Activated B cell treated with CpG ODN at 0.5 μM for 24 hours (primary cell): ENCODE measurements at regions of chr7 and their contacts with region 1.

Region 1: DNA sequence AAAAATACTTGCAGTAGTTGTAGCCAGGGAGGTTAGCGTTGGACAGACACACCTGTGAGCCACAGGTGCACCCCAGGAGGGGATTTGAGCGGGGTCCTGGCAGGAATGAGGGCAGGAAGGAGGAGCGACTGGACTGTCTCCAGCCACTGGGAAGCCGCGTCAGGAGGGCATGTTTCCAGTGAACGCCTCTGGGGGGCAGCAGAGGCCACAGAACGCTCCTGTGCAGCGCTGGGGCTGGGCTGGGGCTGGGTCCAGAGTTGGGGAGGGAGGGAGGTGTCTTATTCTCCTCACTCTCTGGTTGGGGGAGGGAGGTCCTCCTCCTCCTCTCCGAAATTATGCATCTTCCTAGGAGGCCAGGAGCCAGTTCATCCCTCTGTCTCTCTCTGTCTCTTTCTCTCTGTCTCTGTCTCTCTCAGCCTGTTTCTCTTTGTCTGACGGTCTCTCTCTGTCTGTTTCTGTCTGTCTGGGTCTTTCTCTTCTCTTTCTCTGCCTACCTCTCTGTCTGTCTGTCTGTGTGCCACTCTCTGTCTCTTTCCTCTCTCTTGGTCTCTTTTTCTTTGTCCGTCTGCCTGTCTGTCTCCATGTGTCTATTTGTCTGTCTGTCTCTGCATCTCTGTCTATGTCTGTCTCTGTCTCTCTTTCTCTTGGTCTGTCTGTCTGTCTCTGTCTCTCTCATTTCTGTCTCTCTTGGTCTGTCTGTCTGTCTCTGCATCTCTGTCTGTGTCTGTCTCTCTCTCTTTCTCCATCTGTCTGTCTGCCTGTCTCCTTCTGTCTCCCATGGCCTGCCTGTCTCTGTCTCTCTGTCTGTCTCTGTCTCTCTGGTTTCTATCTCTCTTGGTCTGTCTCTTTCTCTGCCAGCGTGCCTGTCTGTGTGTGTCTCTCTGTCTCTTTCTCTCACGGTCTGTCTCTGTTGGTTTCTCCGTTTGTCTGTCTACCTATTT is 9.9 kb upstream of the PSMG3 start:
- DNase-seq: peak; percentile 62
- ATAC-seq: peak; percentile 100
- H3K4me3 Mint-ChIP-seq: no peak overlapping the region
- H3K27ac Mint-ChIP-seq: no peak overlapping the region
- H3K4me1 Mint-ChIP-seq: peaks cover 11% of the 10 kb centered on the region
- H3K27me3 Mint-ChIP-seq: no peaks in the 10 kb centered on the region
- CTCF ChIP-seq: peak; percentile 48

Region 2: GRCh38 chr7:1473864-1474512 is 105.8 kb before region 1 on chr7:
- CTCF ChIA-PET with region 1: no interaction called
- POLR2A ChIA-PET with region 1: no interaction called
- intact Hi-C with region 1: no loop called
- DNase-seq: peak; percentile 68
- ATAC-seq: peak; percentile 81
- H3K4me3 Mint-ChIP-seq: no peak overlapping the region
- H3K27ac Mint-ChIP-seq: no peak overlapping the region
- H3K4me1 Mint-ChIP-seq: no peaks in the 10 kb centered on the region
- H3K27me3 Mint-ChIP-seq: no peaks in the 10 kb centered on the region
- CTCF ChIP-seq: no peak

Region 3: DNA sequence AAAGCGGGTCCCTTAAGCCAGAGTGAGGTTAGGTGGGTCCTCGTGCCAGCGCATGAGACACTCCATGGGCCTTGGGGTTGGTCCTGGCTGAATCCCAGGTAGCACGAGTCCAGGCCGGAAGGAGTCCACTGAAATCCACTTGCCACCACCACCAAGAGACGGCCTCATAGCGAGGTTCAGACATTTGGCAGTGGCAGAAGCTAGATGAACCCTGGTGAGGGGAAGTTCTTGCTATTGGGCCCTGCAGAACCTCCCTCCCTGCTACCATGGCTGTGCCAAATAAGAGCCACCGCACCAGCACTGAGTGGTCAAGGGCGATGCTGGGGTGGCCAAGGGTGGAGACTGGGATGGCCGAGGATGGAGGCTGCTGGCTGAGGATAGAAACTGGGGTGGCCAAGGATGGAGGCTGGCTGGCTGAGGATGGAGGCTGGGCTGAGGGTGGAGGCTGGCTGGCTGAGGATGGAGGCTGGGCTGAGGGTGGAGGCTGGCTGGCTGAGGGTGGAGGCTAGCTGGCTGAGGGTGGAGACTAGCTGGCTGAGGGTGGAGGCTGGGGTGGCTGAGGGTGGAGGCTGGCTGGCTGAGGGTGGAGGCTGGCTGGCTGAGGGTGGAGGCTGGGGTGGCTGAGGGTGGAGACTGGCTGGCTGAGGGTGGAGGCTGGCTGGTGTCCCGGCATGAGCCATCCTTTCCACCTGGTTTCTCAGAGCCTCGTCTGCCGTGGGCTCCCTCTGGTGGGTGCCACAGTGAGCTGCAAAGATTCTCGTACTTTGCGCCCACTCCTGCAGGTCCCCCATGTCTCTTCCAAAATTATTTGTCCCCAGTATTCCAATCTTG is 178.5 kb after region 1 on chr7:
- CTCF ChIA-PET with region 1: no interaction called
- POLR2A ChIA-PET with region 1: no interaction called
- intact Hi-C with region 1: loop called (anchors 1 kb)
- DNase-seq: no peak
- ATAC-seq: no peak
- H3K4me3 Mint-ChIP-seq: no peak overlapping the region
- H3K27ac Mint-ChIP-seq: no peak overlapping the region
- H3K4me1 Mint-ChIP-seq: peaks cover 19% of the 10 kb centered on the region
- H3K27me3 Mint-ChIP-seq: peaks cover 14% of the 10 kb centered on the region
- CTCF ChIP-seq: no peak

Region 4: DNA sequence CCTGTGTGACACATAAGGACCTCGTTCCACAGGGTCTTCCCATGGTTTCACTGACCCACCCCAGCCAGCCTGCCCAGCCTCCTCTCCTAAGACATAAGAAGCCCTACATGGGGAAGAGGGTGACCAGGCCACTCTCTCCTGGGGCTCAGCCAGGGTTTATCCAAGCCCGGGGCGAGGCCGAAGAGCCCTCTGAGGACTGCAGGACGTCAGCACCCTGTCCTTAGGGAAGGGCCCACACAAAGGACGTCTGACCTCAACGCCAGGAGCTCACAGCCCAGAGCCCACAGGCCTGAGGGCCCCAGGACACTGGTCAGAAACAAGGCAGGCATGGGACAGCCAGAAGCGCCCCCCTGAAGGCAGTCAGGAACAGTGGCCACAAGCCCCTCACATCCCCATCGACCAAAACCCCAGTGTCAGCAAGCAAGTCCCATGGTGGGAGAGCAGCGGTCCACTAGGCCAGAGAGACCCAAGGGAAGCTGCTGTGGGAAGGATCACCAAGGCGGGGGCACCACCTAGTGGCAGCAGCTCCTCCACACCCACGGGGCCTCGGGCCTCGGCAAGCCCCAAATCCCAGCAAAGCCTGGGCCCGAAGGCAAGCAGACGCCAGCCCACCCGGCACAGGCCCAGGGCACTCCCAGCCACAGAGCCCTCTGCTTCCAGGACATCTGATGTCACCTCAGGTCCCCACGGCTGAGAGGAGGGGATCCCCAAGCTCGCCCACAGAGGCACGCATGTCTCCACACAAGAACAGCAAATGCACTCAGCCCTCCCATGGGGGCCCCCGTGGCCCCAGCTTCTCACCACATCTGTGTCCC is 629.6 kb after region 1 on chr7:
- CTCF ChIA-PET with region 1: interaction called, 6 read pairs
- POLR2A ChIA-PET with region 1: no interaction called
- intact Hi-C with region 1: loop called (anchors 1 kb)
- DNase-seq: peak; percentile 58
- ATAC-seq: peak; percentile 85
- H3K4me3 Mint-ChIP-seq: no peak overlapping the region
- H3K27ac Mint-ChIP-seq: peak overlapping the region; percentile 59
- H3K4me1 Mint-ChIP-seq: peaks cover 11% of the 10 kb centered on the region
- H3K27me3 Mint-ChIP-seq: no peaks in the 10 kb centered on the region
- CTCF ChIP-seq: no peak

Region 5: DNA sequence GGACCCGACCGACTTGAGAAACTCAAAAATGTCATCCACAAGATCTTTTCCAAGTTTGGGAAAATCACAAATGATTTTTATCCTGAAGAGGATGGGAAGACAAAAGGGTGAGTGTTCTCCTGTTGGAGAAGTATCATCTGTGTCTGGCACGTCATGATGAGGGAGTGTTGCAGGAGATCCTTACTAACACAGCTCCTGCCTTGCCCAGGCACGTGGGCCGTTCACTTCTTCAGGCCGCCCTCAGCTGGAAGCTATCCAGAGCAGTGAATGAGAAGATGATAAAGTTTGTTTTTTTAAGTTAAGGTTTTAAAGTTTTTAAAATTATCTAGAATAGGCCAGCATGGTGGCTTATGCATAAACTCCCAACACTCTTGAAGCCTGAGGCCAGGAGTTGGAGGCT is 781.0 kb after region 1 on chr7:
- CTCF ChIA-PET with region 1: interaction called, 3 read pairs
- POLR2A ChIA-PET with region 1: no interaction called
- intact Hi-C with region 1: loop called (anchors 1 kb)
- DNase-seq: no peak
- ATAC-seq: no peak
- H3K4me3 Mint-ChIP-seq: no peak overlapping the region
- H3K27ac Mint-ChIP-seq: no peak overlapping the region
- H3K4me1 Mint-ChIP-seq: peaks cover 38% of the 10 kb centered on the region
- H3K27me3 Mint-ChIP-seq: no peaks in the 10 kb centered on the region
- CTCF ChIP-seq: no peak